Calu3 (cell line): ENCODE measurements at regions of chr1 and their contacts with region 1.

Region 1: DNA sequence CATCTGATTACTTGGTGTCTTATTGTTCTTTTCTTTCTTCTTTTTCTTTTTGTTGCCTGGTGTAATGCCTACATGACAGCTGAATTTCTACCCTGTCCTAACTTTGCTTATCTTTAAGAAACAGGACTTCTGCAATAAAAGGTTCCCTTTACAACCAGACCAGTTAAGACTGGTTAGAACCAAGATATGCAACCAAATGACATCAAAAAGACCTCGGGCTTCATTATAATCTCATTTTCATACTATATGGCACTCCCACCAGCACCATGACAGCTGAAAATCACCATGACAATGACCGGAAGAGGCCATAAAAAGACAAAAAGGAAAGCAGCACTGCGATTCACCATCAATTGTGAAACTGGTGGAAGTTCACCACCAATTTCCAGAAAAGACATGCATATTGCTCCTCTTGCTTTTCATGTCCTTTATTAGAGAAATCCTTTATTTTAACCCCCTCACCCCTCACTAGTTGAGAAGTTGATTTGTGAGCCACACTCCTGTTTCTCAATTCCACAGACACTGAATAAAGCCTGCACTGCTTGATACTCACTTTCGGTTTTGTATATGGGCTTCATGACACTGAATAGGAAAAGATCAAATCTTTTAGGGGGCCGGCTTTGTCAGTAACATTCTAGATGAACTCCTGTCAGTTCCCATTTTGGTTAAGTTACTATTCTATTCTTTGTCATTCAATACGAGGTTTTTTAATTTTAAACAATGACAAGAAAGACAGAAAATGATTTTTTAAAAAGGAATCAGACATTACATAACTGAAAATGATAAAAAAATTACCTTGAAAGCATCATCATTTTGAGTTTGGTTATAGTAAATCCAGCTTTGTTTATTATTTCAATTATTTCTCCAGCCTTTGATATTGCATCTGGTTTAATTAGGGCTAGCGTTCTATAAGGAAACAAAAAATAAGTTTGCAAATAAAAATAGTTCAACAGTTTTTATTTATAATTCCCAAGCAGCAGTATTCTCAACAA is 58.1 kb downstream of the NME7 start:
- DNase-seq: no peak
- H3K4me3 Mint-ChIP-seq: no peak overlapping the region
- H3K27ac Mint-ChIP-seq: no peak overlapping the region
- H3K4me1 Mint-ChIP-seq: peaks cover 15% of the 10 kb centered on the region
- H3K27me3 Mint-ChIP-seq: no peaks in the 10 kb centered on the region
- CTCF ChIP-seq: no peak

Region 2: GRCh38 chr1:169288011-169288414 is 21.5 kb before region 1 on chr1:
- CTCF ChIA-PET with region 1: no interaction called
- intact Hi-C with region 1: loop called (anchors 2 kb)
- DNase-seq: no peak
- H3K4me3 Mint-ChIP-seq: no peak overlapping the region
- H3K27ac Mint-ChIP-seq: peak overlapping the region; percentile 66
- H3K4me1 Mint-ChIP-seq: peaks cover 27% of the 10 kb centered on the region
- H3K27me3 Mint-ChIP-seq: no peaks in the 10 kb centered on the region
- CTCF ChIP-seq: no peak